ENCODE measurements at regions of chr22 and their contacts with region 1.

Region 1: DNA sequence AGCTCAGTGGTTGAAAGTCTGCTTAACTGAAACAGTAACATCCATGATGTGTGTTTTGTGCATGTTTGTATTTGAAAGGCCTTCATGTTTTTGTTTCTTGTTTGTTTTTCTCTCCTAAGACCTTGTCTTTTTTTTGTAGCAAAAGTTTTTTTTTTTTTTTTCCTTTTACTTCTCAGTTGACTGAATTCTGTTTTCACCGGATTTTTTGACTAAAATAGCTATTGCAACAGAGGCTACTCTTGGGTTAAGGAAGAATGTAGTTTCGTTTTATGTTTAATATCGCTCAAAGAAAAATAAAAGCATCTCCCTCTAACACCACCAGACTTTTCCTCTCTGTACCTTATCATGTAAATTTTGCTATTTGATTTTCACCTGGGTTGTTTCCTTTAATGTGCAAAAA is 15.1 kb downstream of the APOL6 start:
- DNase-seq: no peak
- H3K4me3 ChIP-seq: no peak overlapping the region
- H3K27ac ChIP-seq: no peak overlapping the region
- H3K4me1 ChIP-seq: peaks cover 4% of the 10 kb centered on the region
- H3K27me3 ChIP-seq: peaks cover 0 to 3% of the 10 kb centered on the region in 2 experiments
- CTCF ChIP-seq: no peak
- POLR2A ChIP-seq: no peak

Region 2: DNA sequence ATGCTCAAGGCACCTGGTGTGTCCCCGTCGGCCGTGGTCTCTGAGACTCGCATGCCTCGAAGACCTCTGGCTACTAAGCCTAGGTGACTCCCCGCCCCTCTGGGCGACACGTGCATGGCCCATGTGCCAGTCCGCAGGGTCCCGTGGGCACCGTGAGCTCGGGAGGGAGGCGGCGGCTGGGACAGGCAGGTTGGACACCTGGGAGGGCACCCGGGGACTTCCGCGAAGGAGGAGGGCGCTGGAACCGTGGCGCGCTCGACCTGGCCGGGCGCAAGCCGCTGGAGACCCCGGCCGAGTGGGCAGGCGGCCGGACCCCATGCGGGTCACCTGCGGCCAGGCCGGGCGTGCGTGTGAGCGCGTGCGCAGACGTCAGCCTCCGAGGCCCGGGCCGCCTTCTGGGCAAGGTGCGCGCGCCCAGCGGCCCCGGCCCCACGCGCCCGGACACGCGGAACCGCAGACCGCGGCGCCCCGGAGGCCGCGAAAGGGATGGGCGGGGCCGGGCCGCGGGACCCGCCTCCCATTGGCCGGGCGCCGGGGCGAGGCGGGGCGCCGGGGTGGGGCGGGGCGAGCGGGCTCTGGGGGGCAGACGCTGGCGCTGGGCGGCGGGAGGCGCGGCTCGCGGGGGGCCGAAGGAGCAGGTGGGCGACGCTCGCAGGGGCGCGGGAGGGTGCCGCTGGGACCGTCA is 123.3 kb before region 1 on chr22:
- CTCF ChIA-PET with region 1: no interaction called
- POLR2A ChIA-PET with region 1: no interaction called
- dilution Hi-C with region 1: no loop called
- intact Hi-C with region 1: no loop called
- DNase-seq: no peak
- H3K4me3 ChIP-seq: peak overlapping the region in 2 of 3 experiments; percentile 24 to 41
- H3K27ac ChIP-seq: no peak overlapping the region
- H3K4me1 ChIP-seq: peaks cover 14% of the 10 kb centered on the region
- H3K27me3 ChIP-seq: peaks cover 24 to 26% of the 10 kb centered on the region in 2 experiments
- CTCF ChIP-seq: no peak
- POLR2A ChIP-seq: no peak

Region 3: DNA sequence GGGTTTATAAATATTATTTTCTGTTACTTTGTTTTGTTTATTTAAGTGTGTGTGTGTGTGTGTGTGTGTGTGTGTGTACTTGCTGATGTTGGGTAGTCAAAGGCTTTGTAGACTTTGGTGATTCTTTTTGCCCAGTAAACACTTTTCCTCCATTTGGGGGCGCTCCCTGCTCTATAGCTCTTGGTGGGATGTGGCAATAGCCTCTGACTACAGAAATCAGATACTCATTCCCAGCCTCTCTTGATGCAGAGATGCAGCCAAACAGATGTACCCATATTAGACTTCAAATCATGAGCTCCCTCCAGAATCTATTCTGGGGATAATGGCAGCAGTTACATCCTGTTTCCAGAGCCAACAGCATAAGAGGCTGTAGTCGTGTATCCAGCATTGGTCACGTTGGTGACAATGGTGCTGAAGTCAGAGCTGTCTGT is 20.9 kb after region 1 on chr22:
- CTCF ChIA-PET with region 1: interaction called, 16 read pairs
- POLR2A ChIA-PET with region 1: no interaction called
- dilution Hi-C with region 1: no loop called
- intact Hi-C with region 1: no loop called
- DNase-seq: peak; percentile 34
- H3K4me3 ChIP-seq: no peak overlapping the region
- H3K27ac ChIP-seq: no peak overlapping the region
- H3K4me1 ChIP-seq: no peaks in the 10 kb centered on the region
- H3K27me3 ChIP-seq: peaks cover 2 to 7% of the 10 kb centered on the region in 2 experiments
- CTCF ChIP-seq: peak; percentile 14 to 32
- POLR2A ChIP-seq: no peak